ENCODE measurements at regions of chr14 and their contacts with region 1.

Region 1: GRCh38 chr14:78790271-78790670 is 620.1 kb downstream of the NRXN3 start:
- DNase-seq: no peak
- H3K4me3 ChIP-seq: no peak overlapping the region
- H3K27ac ChIP-seq: no peak overlapping the region
- H3K4me1 ChIP-seq: peaks cover 0 to 3% (median 0%) of the 10 kb centered on the region in 4 experiments; a peak in 1 of 7 replicates
- H3K27me3 ChIP-seq: no peaks in the 10 kb centered on the region
- CTCF ChIP-seq: peak; percentile 13 to 71 (median 52)
- EP300 ChIP-seq: no peak
- POLR2A ChIP-seq: no peak
- RAD21 ChIP-seq: peak; percentile 48 to 54

Region 2: GRCh38 chr14:78836777-78837176 is 46.5 kb after region 1 on chr14:
- CTCF ChIA-PET with region 1: interaction called, 17 read pairs
- POLR2A ChIA-PET with region 1: no interaction called
- DNase-seq: peak; percentile 74 to 77
- H3K4me3 ChIP-seq: no peak overlapping the region
- H3K27ac ChIP-seq: no peak overlapping the region
- H3K4me1 ChIP-seq: peaks cover 0 to 2% (median 0%) of the 10 kb centered on the region in 4 experiments; a peak in 1 of 7 replicates
- H3K27me3 ChIP-seq: no peaks in the 10 kb centered on the region; a peak in 1 of 7 replicates
- CTCF ChIP-seq: peak; percentile 40 to 96 (median 80)
- EP300 ChIP-seq: peak in 1 of 2 experiments; percentile 8; a peak in 1 of 3 replicates
- POLR2A ChIP-seq: no peak
- RAD21 ChIP-seq: peak; percentile 92 to 96